HepG2 (cell line): ENCODE measurements at regions of chr5 and their contacts with region 1.

Region 1: GRCh38 chr5:132500931-132501630 is 10.5 kb upstream of the IRF1 start:
- DNase-seq: peak; percentile 87
- ATAC-seq: peak; percentile 52
- H3K4me3 ChIP-seq: peak overlapping the region in 1 of 3 experiments; percentile 57; a peak in 2 of 6 replicates
- H3K27ac ChIP-seq: peak overlapping the region; percentile 53
- H3K4me1 ChIP-seq: peaks cover 91% of the 10 kb centered on the region
- H3K27me3 ChIP-seq: no peaks in the 10 kb centered on the region
- CTCF ChIP-seq: peak; percentile 98
- EP300 ChIP-seq: peak in 1 of 2 experiments; percentile 83; a peak in 1 of 4 replicates
- POLR2A ChIP-seq: no peak
- RAD21 ChIP-seq: peak; percentile 94

Region 2: DNA sequence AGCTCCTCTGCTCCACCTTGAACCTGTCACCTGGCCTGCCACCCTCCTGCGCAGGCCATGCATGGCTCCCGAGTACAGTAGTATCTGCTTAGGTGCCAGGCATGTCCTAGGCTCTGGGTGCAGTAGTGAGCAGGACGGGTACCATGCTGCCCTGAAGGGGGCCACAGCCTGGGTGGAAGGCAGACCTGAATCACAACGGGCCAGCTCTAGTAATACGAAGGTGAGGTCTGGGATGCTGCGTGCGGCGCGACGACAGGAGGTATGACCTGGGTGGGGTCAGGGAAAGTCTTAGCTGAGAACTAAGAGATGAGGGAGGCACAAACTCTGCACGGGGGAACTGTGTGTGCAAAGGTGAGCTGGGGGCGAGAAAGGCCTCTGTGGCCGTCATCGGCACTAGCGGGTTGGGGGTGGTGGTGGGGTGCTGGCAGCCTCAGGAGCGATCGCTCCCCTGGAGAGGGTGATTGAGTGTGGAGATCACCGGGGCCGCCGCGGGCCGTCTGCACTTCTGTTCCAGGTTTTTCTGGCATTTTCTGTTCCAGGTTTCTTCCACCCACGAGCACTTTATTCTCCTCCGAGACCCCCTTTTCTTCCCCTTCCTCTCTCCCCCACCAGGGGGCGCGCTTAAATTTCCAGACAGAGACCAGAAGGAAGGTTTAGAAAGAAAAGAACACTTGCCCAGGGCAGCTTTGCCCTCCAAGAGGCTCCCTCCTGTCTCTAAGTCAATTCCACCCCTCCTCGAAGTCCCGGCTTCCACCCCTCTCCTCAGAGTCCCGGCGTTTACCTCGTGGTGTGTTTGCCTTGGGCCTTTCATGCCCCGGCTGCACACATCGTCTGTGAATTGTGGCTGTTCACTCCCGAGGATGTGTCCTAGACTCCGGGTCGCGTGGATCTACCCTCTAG is 228.5 kb before region 1 on chr5:
- CTCF ChIA-PET with region 1: no interaction called
- POLR2A ChIA-PET with region 1: interaction called, 4 read pairs
- in situ Hi-C with region 1: no loop called
- intact Hi-C with region 1: loop called (anchors 2 kb)
- DNase-seq: peak; percentile 38
- ATAC-seq: peak; percentile 36
- H3K4me3 ChIP-seq: no peak overlapping the region
- H3K27ac ChIP-seq: no peak overlapping the region
- H3K4me1 ChIP-seq: peaks cover 52% of the 10 kb centered on the region
- H3K27me3 ChIP-seq: no peaks in the 10 kb centered on the region; a peak in 1 of 5 replicates
- CTCF ChIP-seq: peak; percentile 70
- EP300 ChIP-seq: no peak
- POLR2A ChIP-seq: no peak
- RAD21 ChIP-seq: peak; percentile 38; the same call in 1 of the 2 replicates

Region 3: DNA sequence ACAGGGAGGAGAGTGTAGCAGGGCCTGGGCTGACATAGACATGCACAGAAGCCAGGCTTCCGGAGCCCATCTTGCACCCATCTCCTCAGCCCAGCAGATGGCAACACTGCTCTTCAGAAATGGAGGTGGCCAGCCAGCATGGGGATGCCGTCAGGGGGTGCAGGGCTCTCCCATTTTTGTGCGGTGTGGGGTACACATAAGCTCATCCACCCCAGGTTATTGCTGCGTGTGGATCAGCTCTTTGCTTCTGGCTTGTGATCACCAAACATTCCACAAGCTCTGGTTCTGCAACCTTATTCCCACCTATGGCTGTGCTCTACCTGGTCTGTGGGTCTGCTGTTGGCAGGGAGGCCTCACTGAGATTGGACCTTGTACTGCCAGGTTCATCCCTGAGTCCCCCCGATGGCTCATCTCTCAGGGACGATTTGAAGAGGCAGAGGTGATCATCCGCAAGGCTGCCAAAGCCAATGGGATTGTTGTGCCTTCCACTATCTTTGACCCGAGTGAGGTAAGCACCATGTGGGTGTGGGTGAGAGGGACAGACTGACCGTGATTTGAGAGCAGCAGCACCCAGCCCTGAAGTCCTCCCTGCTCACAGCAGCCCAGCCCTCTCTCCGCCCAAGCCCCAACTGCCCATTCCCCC is 114.3 kb before region 1 on chr5:
- CTCF ChIA-PET with region 1: interaction called, 54 read pairs
- POLR2A ChIA-PET with region 1: interaction called, 10 read pairs
- in situ Hi-C with region 1: loop called (anchors 10 kb)
- intact Hi-C with region 1: loop called (anchors 1 kb)
- DNase-seq: peak; percentile 56
- ATAC-seq: peak; percentile 93
- H3K4me3 ChIP-seq: no peak overlapping the region
- H3K27ac ChIP-seq: no peak overlapping the region
- H3K4me1 ChIP-seq: peaks cover 44% of the 10 kb centered on the region
- H3K27me3 ChIP-seq: no peaks in the 10 kb centered on the region
- CTCF ChIP-seq: peak; percentile 97
- EP300 ChIP-seq: no peak
- POLR2A ChIP-seq: no peak
- RAD21 ChIP-seq: peak; percentile 95

Region 4: GRCh38 chr5:132410451-132411381 is 90.4 kb before region 1 on chr5:
- CTCF ChIA-PET with region 1: no interaction called
- POLR2A ChIA-PET with region 1: interaction called, 31 read pairs
- in situ Hi-C with region 1: no loop called
- intact Hi-C with region 1: no loop called
- DNase-seq: peak; percentile 60
- ATAC-seq: peak; percentile 93
- H3K4me3 ChIP-seq: peak overlapping the region; percentile 63 to 81 (median 74)
- H3K27ac ChIP-seq: peak overlapping the region; percentile 88
- H3K4me1 ChIP-seq: peaks cover 67% of the 10 kb centered on the region
- H3K27me3 ChIP-seq: no peaks in the 10 kb centered on the region; a peak in 1 of 5 replicates
- CTCF ChIP-seq: peak; percentile 80
- EP300 ChIP-seq: peak in 1 of 2 experiments; percentile 24; a peak in 1 of 4 replicates
- POLR2A ChIP-seq: peak; percentile 70 to 77
- RAD21 ChIP-seq: peak; percentile 91

Region 5: GRCh38 chr5:132419502-132420468 is 81.3 kb before region 1 on chr5:
- CTCF ChIA-PET with region 1: interaction called, 44 read pairs
- POLR2A ChIA-PET with region 1: interaction called, 86 read pairs
- in situ Hi-C with region 1: loop called (anchors 10 kb)
- intact Hi-C with region 1: loop called (anchors 1 kb)
- DNase-seq: peak; percentile 54
- ATAC-seq: peak; percentile 77
- H3K4me3 ChIP-seq: no peak overlapping the region
- H3K27ac ChIP-seq: no peak overlapping the region
- H3K4me1 ChIP-seq: peaks cover 52% of the 10 kb centered on the region
- H3K27me3 ChIP-seq: no peaks in the 10 kb centered on the region
- CTCF ChIP-seq: peak; percentile 89
- EP300 ChIP-seq: no peak
- POLR2A ChIP-seq: no peak
- RAD21 ChIP-seq: peak; percentile 89

Region 6: GRCh38 chr5:132426525-132427138 is 74.4 kb before region 1 on chr5:
- CTCF ChIA-PET with region 1: interaction called, 8 read pairs
- POLR2A ChIA-PET with region 1: interaction called, 86 read pairs
- in situ Hi-C with region 1: loop called (anchors 10 kb)
- intact Hi-C with region 1: loop called (anchors 2 kb)
- DNase-seq: peak; percentile 58
- ATAC-seq: peak; percentile 81
- H3K4me3 ChIP-seq: no peak overlapping the region
- H3K27ac ChIP-seq: no peak overlapping the region
- H3K4me1 ChIP-seq: peaks cover 76% of the 10 kb centered on the region
- H3K27me3 ChIP-seq: no peaks in the 10 kb centered on the region
- CTCF ChIP-seq: peak; percentile 71
- EP300 ChIP-seq: no peak
- POLR2A ChIP-seq: 0 out of 4 replicates have a peak, but pooled peaks of 1 of the 2 experiments have one; percentile 19
- RAD21 ChIP-seq: peak; percentile 67; the same call in 1 of the 2 replicates

Region 7: GRCh38 chr5:132540764-132541163 is 39.7 kb after region 1 on chr5:
- CTCF ChIA-PET with region 1: no interaction called
- POLR2A ChIA-PET with region 1: no interaction called
- in situ Hi-C with region 1: no loop called
- intact Hi-C with region 1: no loop called
- DNase-seq: no peak
- ATAC-seq: peak; percentile 40
- H3K4me3 ChIP-seq: no peak overlapping the region
- H3K27ac ChIP-seq: no peak overlapping the region
- H3K4me1 ChIP-seq: peaks cover 11% of the 10 kb centered on the region
- H3K27me3 ChIP-seq: peaks cover 0 to 12% of the 10 kb centered on the region in 2 experiments; a peak in 1 of 5 replicates
- CTCF ChIP-seq: no peak
- EP300 ChIP-seq: no peak
- POLR2A ChIP-seq: no peak
- RAD21 ChIP-seq: no peak